ENCODE measurements at regions of chr17 and their contacts with region 1.

Region 1: GRCh38 chr17:75855310-75856081 is at the start of gene WBP2:
- DNase-seq: peak; percentile 82 to 100 (median 98)
- ATAC-seq: peak; percentile 94
- H3K4me3 ChIP-seq: peak within 1 kb of the TSS; percentile 93
- H3K4me3 Mint-ChIP-seq: peak within 1 kb of the TSS in 2 of 10 donors; percentile 89 to 92
- H3K27ac ChIP-seq: peak within 1 kb of the TSS; percentile 88
- H3K27ac Mint-ChIP-seq: peak within 1 kb of the TSS in 6 of 9 donors; percentile 84 to 95 (median 90)
- H3K4me1 ChIP-seq: peaks cover 19 to 25% of the 10 kb centered on the region in 2 donors
- H3K4me1 Mint-ChIP-seq: peaks cover 19 to 47% (median 39%) of the 10 kb centered on the region in 7 donors
- H3K27me3 ChIP-seq: no peaks in the 10 kb centered on the region
- H3K27me3 Mint-ChIP-seq: no peaks in the 10 kb centered on the region
- total RNA-seq, gene WBP2: 87.7 to 159 (median 112) TPM

Region 2: GRCh38 chr17:75667021-75667790 is 188.3 kb before region 1 on chr17 and contains the starts of genes RECQL5 and SAP30BP:
- CTCF ChIA-PET with region 1: interaction called, 3 read pairs
- POLR2A ChIA-PET with region 1: no interaction called
- intact Hi-C with region 1: loop called in 1 of 2 experiments (anchors 1 kb)
- DNase-seq: peak; percentile 94 to 98 (median 96)
- ATAC-seq: peak; percentile 100
- H3K4me3 ChIP-seq: peak within 1 kb of the TSS; percentile 99
- H3K4me3 Mint-ChIP-seq: peak within 1 kb of the TSS in 6 of 10 donors; percentile 59 to 74 (median 64)
- H3K27ac ChIP-seq: peak within 1 kb of the TSS; percentile 96
- H3K27ac Mint-ChIP-seq: peak within 1 kb of the TSS in 5 of 9 donors; percentile 6 to 83 (median 60)
- H3K4me1 ChIP-seq: peaks cover 21 to 26% of the 10 kb centered on the region in 2 donors
- H3K4me1 Mint-ChIP-seq: peaks cover 11 to 34% (median 21%) of the 10 kb centered on the region in 7 donors
- H3K27me3 ChIP-seq: no peaks in the 10 kb centered on the region
- H3K27me3 Mint-ChIP-seq: no peaks in the 10 kb centered on the region
- total RNA-seq, gene RECQL5: 38.7 to 76.5 (median 49.2) TPM
- total RNA-seq, gene SAP30BP: 97.6 to 198 (median 116) TPM

Region 3: DNA sequence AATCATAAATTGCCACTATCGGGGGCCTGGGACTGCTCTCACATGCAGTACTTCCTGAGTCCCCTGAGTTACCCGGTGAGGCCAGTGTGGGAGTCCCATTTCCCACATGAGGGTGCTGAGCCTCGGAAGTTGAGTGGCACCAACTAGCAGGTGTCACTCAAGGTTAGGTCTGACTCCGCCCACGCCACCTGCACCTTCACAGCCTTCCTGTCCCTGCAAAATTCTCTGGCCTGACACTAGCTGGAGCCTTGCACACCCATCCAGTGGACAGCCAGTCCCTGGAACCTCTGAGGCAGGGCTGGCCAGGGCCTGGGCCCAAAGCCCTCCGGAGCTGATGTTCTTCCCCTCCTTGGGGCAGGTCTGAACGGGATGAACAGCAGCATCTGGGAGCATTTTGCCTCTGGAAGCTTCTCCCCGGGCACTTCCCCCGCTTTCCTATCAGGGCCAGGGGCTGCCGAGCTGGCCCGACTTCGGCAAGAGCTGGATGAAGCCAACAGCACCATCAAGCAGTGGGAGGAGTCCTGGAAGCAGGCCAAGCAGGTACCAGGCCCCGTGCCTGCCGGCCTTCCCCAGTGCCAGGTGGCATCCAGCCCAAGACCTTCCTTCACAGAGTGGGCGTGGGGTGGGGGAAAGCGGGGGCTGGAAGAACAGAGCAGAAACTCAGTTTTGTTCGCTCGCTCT is 33.2 kb before region 1 on chr17:
- CTCF ChIA-PET with region 1: interaction called, 16 read pairs
- POLR2A ChIA-PET with region 1: interaction called, 23 read pairs
- intact Hi-C with region 1: loop called in 1 of 2 experiments (anchors 2 kb)
- DNase-seq: peak in 7 of 9 donors; percentile 26 to 49 (median 46)
- ATAC-seq: peak; percentile 69
- H3K4me3 ChIP-seq: no peak overlapping the region
- H3K4me3 Mint-ChIP-seq: peak overlapping the region in 8 of 10 donors; percentile 12 to 62 (median 50)
- H3K27ac ChIP-seq: peak overlapping the region; percentile 67
- H3K27ac Mint-ChIP-seq: peak overlapping the region; percentile 69 to 93 (median 89)
- H3K4me1 ChIP-seq: peaks cover 10 to 15% of the 10 kb centered on the region in 2 donors
- H3K4me1 Mint-ChIP-seq: peaks cover 17 to 25% (median 18%) of the 10 kb centered on the region in 7 donors
- H3K27me3 ChIP-seq: no peaks in the 10 kb centered on the region
- H3K27me3 Mint-ChIP-seq: no peaks in the 10 kb centered on the region

Region 4: GRCh38 chr17:75872434-75873351 is 17.2 kb after region 1 on chr17:
- CTCF ChIA-PET with region 1: interaction called, 25 read pairs
- POLR2A ChIA-PET with region 1: interaction called, 354 read pairs
- intact Hi-C with region 1: loop called in 1 of 2 experiments (anchors 1 kb)
- DNase-seq: peak in 8 of 9 donors; percentile 41 to 75 (median 59)
- ATAC-seq: peak; percentile 68
- H3K4me3 ChIP-seq: no peak overlapping the region
- H3K4me3 Mint-ChIP-seq: peak overlapping the region in 5 of 10 donors; percentile 30 to 69 (median 48)
- H3K27ac ChIP-seq: peak overlapping the region; percentile 57
- H3K27ac Mint-ChIP-seq: peak overlapping the region; percentile 68 to 98 (median 83)
- H3K4me1 ChIP-seq: peaks cover 30 to 36% of the 10 kb centered on the region in 2 donors
- H3K4me1 Mint-ChIP-seq: peaks cover 24 to 50% (median 39%) of the 10 kb centered on the region in 7 donors
- H3K27me3 ChIP-seq: no peaks in the 10 kb centered on the region
- H3K27me3 Mint-ChIP-seq: peaks cover 0 to 2% (median 0%) of the 10 kb centered on the region in 5 donors

Region 5: GRCh38 chr17:75904749-75905521 is 49.4 kb after region 1 on chr17 and contains the start of gene MRPL38:
- CTCF ChIA-PET with region 1: interaction called, 3 read pairs
- POLR2A ChIA-PET with region 1: interaction called, 40 read pairs
- intact Hi-C with region 1: loop called in 1 of 2 experiments (anchors 1 kb)
- DNase-seq: peak; percentile 88 to 97 (median 91)
- ATAC-seq: peak; percentile 99
- H3K4me3 ChIP-seq: peak within 1 kb of the TSS; percentile 72
- H3K4me3 Mint-ChIP-seq: peak within 1 kb of the TSS; percentile 83 to 97 (median 92)
- H3K27ac ChIP-seq: peak within 1 kb of the TSS; percentile 85
- H3K27ac Mint-ChIP-seq: peak within 1 kb of the TSS; percentile 90 to 97 (median 95)
- H3K4me1 ChIP-seq: peaks cover 0 to 5% of the 10 kb centered on the region in 2 donors
- H3K4me1 Mint-ChIP-seq: peaks cover 2 to 16% (median 14%) of the 10 kb centered on the region in 7 donors
- H3K27me3 ChIP-seq: no peaks in the 10 kb centered on the region
- H3K27me3 Mint-ChIP-seq: no peaks in the 10 kb centered on the region
- total RNA-seq, gene MRPL38: 81.0 to 154 (median 128) TPM

Region 6: GRCh38 chr17:76005263-76006149 is 150.0 kb after region 1 on chr17:
- CTCF ChIA-PET with region 1: no interaction called
- POLR2A ChIA-PET with region 1: interaction called, 3 read pairs
- intact Hi-C with region 1: loop called in 1 of 2 experiments (anchors 1 kb)
- DNase-seq: peak; percentile 57 to 87 (median 73)
- ATAC-seq: peak; percentile 77
- H3K4me3 ChIP-seq: no peak overlapping the region
- H3K4me3 Mint-ChIP-seq: no peak overlapping the region
- H3K27ac ChIP-seq: no peak overlapping the region
- H3K27ac Mint-ChIP-seq: peak overlapping the region in 3 of 9 donors; percentile 47 to 65 (median 55)
- H3K4me1 ChIP-seq: no peaks in the 10 kb centered on the region
- H3K4me1 Mint-ChIP-seq: peaks cover 0 to 7% (median 4%) of the 10 kb centered on the region in 7 donors
- H3K27me3 ChIP-seq: no peaks in the 10 kb centered on the region
- H3K27me3 Mint-ChIP-seq: no peaks in the 10 kb centered on the region

Region 7: DNA sequence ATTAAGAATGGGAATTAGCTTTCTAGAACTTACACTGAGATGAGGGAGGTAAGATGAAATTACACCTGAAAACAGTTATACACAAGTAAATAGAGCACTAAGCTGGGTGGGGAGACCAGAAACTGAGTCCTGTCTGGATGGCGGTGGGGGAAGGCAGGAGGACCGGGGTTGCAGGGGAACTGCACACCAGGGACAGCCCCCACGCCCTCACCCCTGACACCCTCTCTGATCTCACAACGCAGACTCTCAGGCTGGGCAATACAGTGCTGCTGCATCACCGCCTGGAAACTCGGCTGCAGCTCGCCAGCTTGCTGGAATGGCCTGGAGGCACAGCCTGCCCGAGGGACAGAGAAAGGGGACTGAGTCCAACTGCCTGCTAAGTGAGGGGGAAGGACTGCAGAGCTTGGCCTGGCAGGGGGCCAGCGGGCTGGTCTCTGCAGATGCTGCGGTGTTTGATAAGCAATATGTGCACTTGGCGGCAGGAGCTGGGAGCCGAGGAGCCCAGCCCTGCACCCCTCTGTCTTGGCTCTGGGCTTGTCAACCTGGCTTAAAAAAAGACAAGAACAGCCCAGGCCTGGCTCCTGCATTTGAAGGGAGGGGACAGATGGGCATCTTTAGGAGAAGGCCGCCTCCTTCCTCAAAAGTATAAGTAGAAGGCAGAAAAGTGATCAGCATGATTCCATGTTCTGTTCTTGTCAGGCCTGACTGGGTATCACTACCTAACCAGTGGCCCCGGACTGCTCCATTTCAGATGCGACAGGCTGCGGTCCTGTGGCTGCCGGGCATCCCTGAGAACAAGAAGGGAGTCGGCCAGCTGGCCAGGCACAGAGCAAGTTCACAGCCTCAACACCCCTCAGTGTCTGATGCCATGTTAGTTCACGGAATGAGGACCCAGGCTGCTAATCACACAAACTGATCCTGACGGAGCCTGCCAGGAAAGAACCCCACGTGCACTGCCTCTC is 559.1 kb after region 1 on chr17:
- CTCF ChIA-PET with region 1: no interaction called
- POLR2A ChIA-PET with region 1: no interaction called
- intact Hi-C with region 1: no loop called
- DNase-seq: no peak
- ATAC-seq: no peak
- H3K4me3 ChIP-seq: no peak overlapping the region
- H3K4me3 Mint-ChIP-seq: no peak overlapping the region
- H3K27ac ChIP-seq: no peak overlapping the region
- H3K27ac Mint-ChIP-seq: peak overlapping the region in 3 of 9 donors; percentile 28 to 51 (median 38)
- H3K4me1 ChIP-seq: no peaks in the 10 kb centered on the region
- H3K4me1 Mint-ChIP-seq: peaks cover 8 to 22% (median 12%) of the 10 kb centered on the region in 7 donors
- H3K27me3 ChIP-seq: no peaks in the 10 kb centered on the region
- H3K27me3 Mint-ChIP-seq: no peaks in the 10 kb centered on the region

Measured in naive thymus-derived CD4-positive, alpha-beta T cell (primary cell).